Body of pancreas (tissue), 4 donors: ENCODE measurements at regions of chr1 and their contacts with region 1.

Region 1: GRCh38 chr1:10686404-10687040 is 109.9 kb downstream of the CASZ1 start:
- DNase-seq: peak; percentile 54 to 66 (median 59)
- ATAC-seq: peak; percentile 40
- H3K4me3 ChIP-seq: no peak overlapping the region
- H3K27ac ChIP-seq: peak overlapping the region; percentile 86 to 95 (median 92)
- H3K4me1 ChIP-seq: peaks cover 95% of the 10 kb centered on the region
- H3K27me3 ChIP-seq: no peaks in the 10 kb centered on the region
- CTCF ChIP-seq: peak in 3 of 7 experiments; percentile 21 to 39 (median 23)
- POLR2A ChIP-seq: no peak

Region 2: GRCh38 chr1:10319750-10320149 is 366.8 kb before region 1 on chr1:
- intact Hi-C with region 1: no loop called
- DNase-seq: no peak
- ATAC-seq: no peak
- H3K4me3 ChIP-seq: no peak overlapping the region
- H3K27ac ChIP-seq: no peak overlapping the region
- H3K4me1 ChIP-seq: no peaks in the 10 kb centered on the region
- H3K27me3 ChIP-seq: no peaks in the 10 kb centered on the region
- CTCF ChIP-seq: no peak
- POLR2A ChIP-seq: no peak

Region 3: GRCh38 chr1:10561955-10562354 is 124.6 kb before region 1 on chr1:
- intact Hi-C with region 1: no loop called
- DNase-seq: no peak
- ATAC-seq: no peak
- H3K4me3 ChIP-seq: no peak overlapping the region
- H3K27ac ChIP-seq: no peak overlapping the region
- H3K4me1 ChIP-seq: no peaks in the 10 kb centered on the region
- H3K27me3 ChIP-seq: no peaks in the 10 kb centered on the region
- CTCF ChIP-seq: no peak
- POLR2A ChIP-seq: no peak

Region 4: DNA sequence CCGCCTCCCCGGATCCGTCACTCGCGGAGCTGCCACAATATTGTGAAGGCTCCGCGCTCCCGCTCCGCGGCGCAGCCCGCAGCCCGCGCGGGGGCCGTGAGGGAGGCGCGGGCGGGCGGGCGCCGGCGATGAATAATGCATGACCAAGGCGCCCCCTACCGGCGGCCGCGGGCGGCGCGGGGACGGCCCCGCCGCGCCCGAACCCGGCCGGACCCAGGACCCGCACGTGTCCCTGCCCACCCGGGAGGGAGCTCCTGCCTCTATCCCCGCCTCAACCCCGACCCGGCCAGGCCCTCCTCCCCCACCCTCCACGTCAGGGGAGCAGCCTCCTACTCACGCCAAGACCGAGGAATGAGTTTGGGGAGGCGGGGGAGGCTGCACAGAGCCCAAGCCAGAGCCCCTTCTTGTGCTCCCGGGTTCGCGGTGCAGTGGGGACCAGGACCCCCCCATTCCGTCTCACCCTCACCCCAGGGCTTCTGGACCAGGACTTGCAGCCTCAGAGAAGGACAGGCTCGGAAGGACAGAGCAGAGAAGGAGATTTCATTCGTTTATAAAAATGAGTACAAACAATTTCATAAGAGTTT is 180.7 kb after region 1 on chr1:
- intact Hi-C with region 1: loop called (anchors 5 kb)
- DNase-seq: peak; percentile 45 to 75 (median 60)
- ATAC-seq: peak; percentile 81
- H3K4me3 ChIP-seq: no peak overlapping the region
- H3K27ac ChIP-seq: no peak overlapping the region
- H3K4me1 ChIP-seq: peaks cover 12% of the 10 kb centered on the region
- H3K27me3 ChIP-seq: no peaks in the 10 kb centered on the region
- CTCF ChIP-seq: peak in 6 of 7 experiments; percentile 20 to 98 (median 89)
- POLR2A ChIP-seq: no peak